ENCODE measurements at regions of chr10 and their contacts with region 1.

Region 1: GRCh38 chr10:68752711-68753350 is 31.8 kb downstream of the CCAR1 start:
- DNase-seq: no peak
- ATAC-seq: no peak
- H3K4me3 ChIP-seq: no peak overlapping the region
- H3K27ac ChIP-seq: no peak overlapping the region
- H3K4me1 ChIP-seq: no peaks in the 10 kb centered on the region
- H3K27me3 ChIP-seq: no peaks in the 10 kb centered on the region
- CTCF ChIP-seq: no peak

Region 2: DNA sequence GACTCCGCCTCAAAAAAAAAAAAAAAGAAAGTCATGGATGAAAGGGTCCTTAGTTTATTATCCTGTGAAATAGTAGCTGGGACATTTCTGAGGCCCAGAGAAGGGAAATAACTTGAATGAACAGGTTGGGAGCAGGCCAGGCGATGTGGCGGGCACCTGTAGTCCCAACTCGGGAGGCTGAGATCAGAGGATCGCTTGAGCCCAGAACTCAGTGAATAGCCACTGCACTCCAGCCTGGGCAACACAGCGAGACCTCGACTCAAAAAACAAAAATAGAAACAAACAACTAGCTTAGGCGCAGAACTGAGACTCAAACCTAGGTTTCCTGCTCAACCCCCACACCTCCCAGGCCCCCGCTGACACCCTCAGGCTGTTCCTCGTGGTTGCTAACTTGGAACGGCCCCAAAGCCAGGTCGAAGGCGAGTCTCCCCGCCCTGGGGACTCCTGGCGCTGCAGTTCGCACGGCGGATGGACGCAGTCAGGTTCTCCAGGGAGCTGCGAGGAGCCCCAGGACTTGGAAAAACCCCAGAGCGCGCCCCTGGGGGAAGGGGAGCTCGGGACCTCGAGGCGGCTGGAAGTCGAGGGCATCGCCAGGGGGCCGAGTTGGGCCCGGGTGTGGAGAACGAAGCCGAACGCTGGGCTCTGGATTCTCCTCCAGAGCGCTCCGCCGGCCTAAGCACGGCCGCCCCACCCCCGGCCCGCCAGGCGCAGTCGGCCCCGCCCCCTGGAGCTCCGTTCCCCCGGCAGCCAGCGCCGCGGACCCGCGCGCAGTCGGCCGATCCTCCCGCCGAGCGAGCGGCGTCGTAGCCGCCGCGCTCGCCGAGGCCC is 74.1 kb after region 1 on chr10 and contains the start of gene STOX1:
- CTCF ChIA-PET with region 1: no interaction called
- POLR2A ChIA-PET with region 1: interaction called, 11 read pairs
- in situ Hi-C with region 1: no loop called
- intact Hi-C with region 1: no loop called
- DNase-seq: no peak
- ATAC-seq: peak; percentile 94
- H3K4me3 ChIP-seq: peak within 1 kb of the TSS; percentile 62 to 66
- H3K27ac ChIP-seq: peak within 1 kb of the TSS; percentile 88
- H3K4me1 ChIP-seq: peaks cover 7% of the 10 kb centered on the region; the same call in 1 of the 2 replicates
- H3K27me3 ChIP-seq: no peaks in the 10 kb centered on the region
- CTCF ChIP-seq: no peak
- total RNA-seq, gene STOX1: 5.8 TPM

Region 3: DNA sequence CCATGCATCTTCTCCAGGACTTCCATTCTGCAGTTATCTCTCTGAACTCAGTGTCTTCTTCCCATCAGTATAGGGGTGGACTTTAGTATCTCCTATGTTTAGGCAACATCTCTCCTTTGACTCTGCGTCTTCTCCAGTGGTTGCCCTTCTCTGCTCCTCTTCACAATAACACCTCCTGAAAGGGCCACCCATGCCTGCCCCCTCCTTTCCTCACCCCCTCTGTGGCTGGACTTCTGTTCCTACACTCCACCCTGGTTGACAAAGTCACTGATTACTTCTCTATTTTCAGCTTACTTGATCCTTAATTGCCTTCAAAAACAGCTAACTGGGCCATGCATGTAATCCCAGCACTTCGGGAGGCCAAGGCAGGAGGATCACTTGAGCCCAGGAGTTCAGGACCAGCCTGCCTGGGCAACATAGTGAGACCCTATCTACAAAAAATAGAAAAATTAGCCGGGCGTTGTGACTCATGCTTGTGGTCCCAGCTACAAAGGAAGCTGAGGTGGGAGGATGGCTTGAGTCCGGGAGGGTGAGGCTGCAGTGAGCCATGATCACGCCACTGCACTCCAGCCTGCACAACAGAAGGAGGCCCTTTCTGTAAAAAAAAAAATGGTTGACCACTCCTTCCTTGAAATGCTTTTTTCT is 348.7 kb after region 1 on chr10:
- CTCF ChIA-PET with region 1: no interaction called
- POLR2A ChIA-PET with region 1: no interaction called
- in situ Hi-C with region 1: no loop called
- intact Hi-C with region 1: no loop called
- DNase-seq: no peak
- ATAC-seq: 0 out of 2 replicates have a peak, but pooled peaks have one; percentile 32
- H3K4me3 ChIP-seq: no peak overlapping the region
- H3K27ac ChIP-seq: no peak overlapping the region
- H3K4me1 ChIP-seq: no peaks in the 10 kb centered on the region
- H3K27me3 ChIP-seq: no peaks in the 10 kb centered on the region
- CTCF ChIP-seq: no peak